ENCODE measurements at regions of chr4 and their contacts with region 1.

Region 1: DNA sequence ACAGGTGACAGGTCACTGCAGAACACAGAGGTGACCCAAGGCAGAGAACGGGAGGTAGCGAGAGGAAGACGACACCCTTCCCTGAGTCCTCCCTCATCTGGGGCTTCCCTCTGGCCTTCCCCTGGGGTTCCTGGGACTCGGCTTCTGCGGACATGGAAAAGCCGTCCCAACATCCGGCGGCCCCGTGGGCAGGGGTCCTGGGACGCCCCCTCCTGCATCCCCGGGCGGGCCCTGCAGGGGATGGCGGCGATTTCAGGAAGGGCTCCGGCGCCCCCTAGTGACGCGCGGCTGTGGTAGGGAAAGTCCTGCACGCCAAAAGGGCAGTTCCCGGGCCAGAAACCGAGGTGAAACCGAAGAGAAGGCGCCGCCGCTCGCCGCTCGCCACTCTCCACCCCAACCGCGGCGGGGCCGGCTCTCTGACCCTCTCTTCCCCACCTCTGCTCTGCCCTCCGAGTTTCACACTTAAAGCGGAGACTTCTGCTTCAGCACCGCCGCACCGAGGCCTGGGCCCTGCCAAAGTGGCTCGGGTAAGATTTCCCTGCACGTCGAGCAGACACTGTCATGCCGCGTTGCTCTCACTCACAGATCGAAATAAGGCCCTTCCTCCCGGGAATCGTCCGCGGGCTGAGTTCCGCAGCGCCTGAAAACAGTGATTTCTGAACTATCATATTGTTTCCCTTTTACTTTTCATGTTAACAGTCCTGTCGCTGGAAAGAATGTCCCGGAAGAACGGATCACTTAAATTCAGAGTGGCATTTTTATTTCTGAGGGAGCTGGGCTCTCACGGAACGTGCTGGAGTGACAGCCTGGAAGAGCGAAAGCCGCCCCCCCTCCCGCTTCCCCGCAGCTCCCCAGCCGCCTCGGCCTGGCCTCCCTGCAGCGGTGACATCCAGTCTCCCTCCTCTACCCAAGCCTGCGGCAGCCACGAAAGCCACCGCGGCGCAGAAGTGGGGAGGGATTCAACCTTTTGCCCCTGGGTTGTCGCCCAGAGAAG is 110.6 kb downstream of the DCTD start:
- DNase-seq: peak; percentile 83
- H3K4me3 ChIP-seq: peak overlapping the region; percentile 36 to 57 (median 53)
- H3K27ac ChIP-seq: peak overlapping the region; percentile 21 to 71 (median 57)
- H3K4me1 ChIP-seq: peaks cover 0 to 12% (median 4%) of the 10 kb centered on the region in 4 donors
- H3K27me3 ChIP-seq: no peaks in the 10 kb centered on the region
- CTCF ChIP-seq: peak; percentile 73 to 94 (median 86)
- EP300 ChIP-seq: no peak
- POLR2A ChIP-seq: no peak

Region 2: DNA sequence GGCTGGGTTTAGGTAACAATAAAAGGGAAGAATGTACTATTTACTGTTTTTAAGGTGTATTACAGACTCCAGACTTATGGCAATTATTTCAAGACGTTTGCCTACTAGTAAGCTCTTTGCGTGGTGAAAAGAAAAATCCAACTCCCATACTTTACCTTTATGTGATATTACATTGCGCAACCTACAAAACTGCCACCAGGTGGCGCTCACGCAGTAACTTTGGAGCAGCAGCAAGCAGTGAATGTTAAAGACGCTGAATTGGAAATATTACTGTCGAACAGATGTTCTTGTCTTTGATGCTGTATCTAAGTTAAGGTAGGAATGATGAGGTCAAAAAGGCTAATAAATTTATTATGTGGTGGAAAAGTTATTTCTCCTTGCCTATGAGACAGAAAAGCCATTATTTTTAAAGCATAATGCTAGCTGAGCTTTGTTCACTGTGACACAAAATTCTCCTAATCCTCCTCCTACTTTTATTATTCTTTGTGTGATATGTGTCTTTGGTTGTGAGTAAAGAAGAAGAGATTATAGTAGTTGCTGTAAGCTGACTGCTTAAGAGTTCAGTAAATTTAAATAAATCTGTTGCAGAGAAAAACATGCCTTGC is 1663.2 kb before region 1 on chr4:
- intact Hi-C with region 1: loop called (anchors 5 kb)
- DNase-seq: peak; percentile 85
- H3K4me3 ChIP-seq: no peak overlapping the region
- H3K27ac ChIP-seq: no peak overlapping the region
- H3K4me1 ChIP-seq: no peaks in the 10 kb centered on the region
- H3K27me3 ChIP-seq: peaks cover 0 to 7% (median 0%) of the 10 kb centered on the region in 3 donors
- CTCF ChIP-seq: peak; percentile 55 to 84 (median 58)
- EP300 ChIP-seq: no peak
- POLR2A ChIP-seq: no peak

Region 3: GRCh38 chr4:181569553-181569952 is 1237.0 kb before region 1 on chr4:
- intact Hi-C with region 1: loop called (anchors 5 kb)
- DNase-seq: no peak
- H3K4me3 ChIP-seq: no peak overlapping the region
- H3K27ac ChIP-seq: no peak overlapping the region
- H3K4me1 ChIP-seq: no peaks in the 10 kb centered on the region
- H3K27me3 ChIP-seq: no peaks in the 10 kb centered on the region
- CTCF ChIP-seq: peak in 3 of 4 experiments; percentile 8 to 28 (median 27)
- EP300 ChIP-seq: no peak
- POLR2A ChIP-seq: no peak

Region 4: GRCh38 chr4:182143822-182144625 is 662.5 kb before region 1 on chr4:
- intact Hi-C with region 1: loop called (anchors 10 kb)
- DNase-seq: no peak
- H3K4me3 ChIP-seq: peak overlapping the region; percentile 59 to 84 (median 78)
- H3K27ac ChIP-seq: peak overlapping the region; percentile 60 to 73 (median 65)
- H3K4me1 ChIP-seq: peaks cover 2 to 23% (median 21%) of the 10 kb centered on the region in 4 donors
- H3K27me3 ChIP-seq: peaks cover 0 to 47% (median 39%) of the 10 kb centered on the region in 3 donors
- CTCF ChIP-seq: no peak
- EP300 ChIP-seq: no peak
- POLR2A ChIP-seq: no peak

Region 5: DNA sequence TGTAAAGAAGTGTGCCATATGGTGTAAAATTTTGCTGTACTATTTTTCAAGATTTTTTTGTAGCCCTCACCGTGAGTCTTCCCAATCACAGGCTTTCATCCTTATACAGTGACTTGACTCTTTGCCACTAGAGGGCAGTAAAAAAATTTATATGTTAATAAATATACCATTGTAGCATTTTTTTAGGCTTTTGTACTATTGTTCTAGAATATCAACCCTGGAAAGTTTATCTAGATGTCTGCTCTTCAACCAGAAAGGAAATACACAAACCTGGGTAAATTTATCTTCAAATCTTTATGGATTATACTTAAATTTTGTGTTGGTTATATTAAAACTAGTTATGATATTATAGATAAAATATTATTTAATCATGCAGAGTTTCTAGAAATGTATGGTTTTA is 328.1 kb before region 1 on chr4:
- intact Hi-C with region 1: loop called (anchors 2 kb)
- DNase-seq: no peak
- H3K4me3 ChIP-seq: no peak overlapping the region
- H3K27ac ChIP-seq: no peak overlapping the region
- H3K4me1 ChIP-seq: peaks cover 0 to 15% (median 2%) of the 10 kb centered on the region in 4 donors
- H3K27me3 ChIP-seq: no peaks in the 10 kb centered on the region
- CTCF ChIP-seq: peak in 3 of 4 experiments; percentile 41 to 62 (median 44)
- EP300 ChIP-seq: no peak
- POLR2A ChIP-seq: no peak